T-cell (primary cell): ENCODE measurements at regions of chr2 and their contacts with region 1.

Region 1: DNA sequence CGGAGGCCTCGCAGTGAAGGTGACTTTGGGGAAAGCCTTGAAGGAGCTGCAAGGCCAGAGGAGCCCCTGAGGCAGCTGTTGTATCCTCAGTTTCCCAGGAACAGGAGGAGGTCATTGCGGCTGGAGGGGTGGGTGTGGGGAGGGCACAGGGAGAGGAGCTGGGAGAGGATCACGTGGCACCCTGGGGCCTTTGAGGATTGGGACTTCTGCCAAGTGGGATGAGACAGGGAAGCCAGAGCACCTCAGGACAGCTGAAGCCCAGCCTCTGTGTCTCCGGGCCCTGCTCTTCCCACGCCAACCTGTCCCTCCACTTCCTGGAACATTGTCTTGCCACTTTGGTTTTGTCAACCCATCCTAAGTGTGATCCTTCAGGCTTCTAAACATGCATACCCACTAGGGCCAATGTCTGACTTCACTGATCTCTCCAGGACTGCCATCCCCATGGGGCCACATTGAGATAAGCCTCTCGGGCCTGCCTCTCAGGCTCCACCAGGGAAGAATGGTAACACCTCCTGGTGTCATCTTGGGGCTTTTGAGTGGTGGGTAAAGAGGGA is 19.3 kb upstream of the RRM2 start:
- DNase-seq: no peak
- ATAC-seq: no peak
- H3K4me3 ChIP-seq: no peak overlapping the region
- H3K4me3 Mint-ChIP-seq: no peak overlapping the region
- H3K27ac ChIP-seq: no peak overlapping the region
- H3K27ac Mint-ChIP-seq: no peak overlapping the region
- H3K4me1 ChIP-seq: no peaks in the 10 kb centered on the region
- H3K4me1 Mint-ChIP-seq: no peaks in the 10 kb centered on the region
- H3K27me3 ChIP-seq: peaks cover 0 to 7% of the 10 kb centered on the region in 2 experiments
- H3K27me3 Mint-ChIP-seq: peaks cover 3 to 4% of the 10 kb centered on the region in 2 donors

Region 2: DNA sequence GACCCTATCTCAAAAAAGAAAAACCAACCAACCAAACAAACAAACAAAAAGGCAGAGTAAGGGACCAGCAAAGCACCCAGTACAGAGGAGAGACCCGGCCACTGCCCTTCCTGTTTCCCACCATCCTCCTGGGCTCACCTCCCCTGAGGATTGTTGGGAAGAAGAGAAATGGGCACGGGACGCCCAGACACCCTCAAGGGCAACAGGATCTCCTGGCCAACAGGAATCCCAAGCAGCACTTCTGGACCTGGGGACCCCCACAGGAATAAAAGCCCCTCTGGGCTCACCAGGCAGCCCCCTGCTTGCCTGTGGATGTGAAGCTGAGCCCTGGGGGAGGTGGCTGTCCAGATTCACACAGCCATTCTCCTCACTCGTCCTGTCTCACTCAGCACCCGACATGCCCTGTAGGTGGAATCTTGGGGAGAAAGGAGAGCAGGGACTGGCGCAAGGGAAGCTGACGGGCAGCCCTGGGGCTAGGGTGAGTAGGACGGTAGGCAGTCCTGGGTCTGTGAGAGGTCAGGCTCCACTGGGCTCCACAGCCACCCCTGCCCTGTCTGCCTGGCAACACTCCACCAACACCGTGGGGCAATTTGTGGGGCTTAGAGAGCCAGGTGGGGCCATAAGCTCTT is 41.9 kb before region 1 on chr2:
- CTCF ChIA-PET with region 1: interaction called in 1 of 2 experiments, 11 read pairs
- POLR2A ChIA-PET with region 1: no interaction called
- DNase-seq: no peak
- ATAC-seq: no peak
- H3K4me3 ChIP-seq: no peak overlapping the region
- H3K4me3 Mint-ChIP-seq: no peak overlapping the region
- H3K27ac ChIP-seq: no peak overlapping the region
- H3K27ac Mint-ChIP-seq: no peak overlapping the region
- H3K4me1 ChIP-seq: peaks cover 0 to 9% of the 10 kb centered on the region in 2 experiments
- H3K4me1 Mint-ChIP-seq: peaks cover 6 to 12% (median 11%) of the 10 kb centered on the region in 3 donors
- H3K27me3 ChIP-seq: peaks cover 0 to 47% of the 10 kb centered on the region in 2 experiments
- H3K27me3 Mint-ChIP-seq: peaks cover 0 to 3% of the 10 kb centered on the region in 2 donors

Region 3: DNA sequence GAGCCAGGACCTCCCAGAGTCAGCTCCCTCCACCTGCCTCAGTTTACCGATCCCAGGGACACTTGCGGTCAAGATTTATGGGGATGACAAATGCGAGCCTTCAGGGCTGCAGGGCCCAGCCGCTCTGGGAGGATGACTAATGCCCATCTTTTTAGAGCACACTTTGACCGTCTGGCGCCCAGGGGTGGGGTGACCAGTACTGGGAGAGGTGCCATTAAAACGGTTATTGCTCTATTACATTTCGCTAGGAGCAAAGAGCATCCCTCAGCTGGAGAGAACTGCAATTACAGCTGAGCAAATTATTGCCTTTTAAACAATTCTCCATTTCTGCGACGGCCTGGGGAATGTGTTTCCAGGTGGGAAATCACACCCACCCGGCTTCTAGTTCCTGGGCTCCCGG is 156.9 kb after region 1 on chr2:
- CTCF ChIA-PET with region 1: no interaction called
- POLR2A ChIA-PET with region 1: no interaction called
- DNase-seq: no peak
- ATAC-seq: no peak
- H3K4me3 ChIP-seq: no peak overlapping the region
- H3K4me3 Mint-ChIP-seq: no peak overlapping the region
- H3K27ac ChIP-seq: no peak overlapping the region
- H3K27ac Mint-ChIP-seq: no peak overlapping the region
- H3K4me1 ChIP-seq: peaks cover 0 to 9% of the 10 kb centered on the region in 2 experiments
- H3K4me1 Mint-ChIP-seq: no peaks in the 10 kb centered on the region
- H3K27me3 ChIP-seq: peaks cover 0 to 30% of the 10 kb centered on the region in 2 experiments
- H3K27me3 Mint-ChIP-seq: peaks cover 0 to 10% of the 10 kb centered on the region in 2 donors